Calu3 (cell line): ENCODE measurements at regions of chr3 and their contacts with region 1.

Region 1: GRCh38 chr3:44529927-44530326 is 25.1 kb upstream of the ZKSCAN7 start:
- DNase-seq: no peak
- H3K4me3 Mint-ChIP-seq: no peak overlapping the region
- H3K27ac Mint-ChIP-seq: no peak overlapping the region
- H3K4me1 Mint-ChIP-seq: peaks cover 9% of the 10 kb centered on the region
- H3K27me3 Mint-ChIP-seq: peaks cover 10% of the 10 kb centered on the region
- CTCF ChIP-seq: no peak

Region 2: DNA sequence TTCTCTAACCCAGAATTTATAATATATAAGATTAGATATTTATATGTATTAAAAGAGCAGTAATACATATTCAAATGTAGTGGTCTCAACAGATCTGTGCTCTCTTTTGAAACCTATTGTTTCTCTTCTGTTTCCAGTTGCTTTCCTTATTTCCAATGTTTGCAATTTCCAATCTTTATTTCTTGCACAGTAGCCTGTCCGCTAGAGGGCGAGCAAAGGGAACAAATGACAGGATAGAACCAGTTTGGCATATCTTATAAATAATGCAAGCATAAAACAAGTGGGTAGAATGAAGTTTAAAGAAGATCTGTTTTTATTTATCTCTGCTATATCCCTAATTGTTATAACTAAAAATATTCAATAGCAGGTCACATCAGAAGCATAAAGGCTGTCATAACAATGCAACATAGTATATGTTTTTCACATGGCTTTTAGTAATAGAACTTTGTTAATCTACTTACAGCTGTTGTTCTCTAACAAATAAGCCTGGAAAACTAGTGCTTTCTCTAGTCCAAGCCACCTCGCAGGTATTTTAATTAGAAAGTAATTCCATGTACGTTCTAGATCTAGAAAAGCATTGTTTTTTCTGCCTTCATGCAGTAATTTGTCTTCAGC is 206.5 kb before region 1 on chr3:
- CTCF ChIA-PET with region 1: no interaction called
- intact Hi-C with region 1: loop called (anchors 2 kb)
- DNase-seq: peak; percentile 73
- H3K4me3 Mint-ChIP-seq: no peak overlapping the region
- H3K27ac Mint-ChIP-seq: no peak overlapping the region
- H3K4me1 Mint-ChIP-seq: no peaks in the 10 kb centered on the region
- H3K27me3 Mint-ChIP-seq: no peaks in the 10 kb centered on the region
- CTCF ChIP-seq: peak; percentile 53

Region 3: DNA sequence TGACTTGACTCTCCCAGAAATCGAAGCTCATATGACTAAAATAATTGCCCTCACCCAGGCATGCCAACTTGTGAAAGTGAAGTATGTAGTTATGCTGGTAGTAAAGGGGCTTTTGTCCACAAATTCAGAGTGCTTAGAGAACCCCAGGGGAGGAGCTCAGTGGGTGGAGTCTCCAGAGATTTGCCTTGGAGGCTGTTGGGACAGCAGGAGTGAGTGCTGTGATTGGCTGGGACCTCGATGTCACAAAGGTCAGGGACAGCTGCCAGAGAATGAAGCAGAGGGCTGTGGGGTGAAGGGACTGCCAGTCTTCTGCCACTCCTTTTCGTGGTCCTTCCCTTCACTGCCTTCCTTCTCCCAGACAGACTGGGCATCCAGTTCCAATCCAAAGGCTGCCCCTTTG is 102.2 kb before region 1 on chr3:
- CTCF ChIA-PET with region 1: no interaction called
- intact Hi-C with region 1: no loop called
- DNase-seq: no peak
- H3K4me3 Mint-ChIP-seq: no peak overlapping the region
- H3K27ac Mint-ChIP-seq: no peak overlapping the region
- H3K4me1 Mint-ChIP-seq: no peaks in the 10 kb centered on the region
- H3K27me3 Mint-ChIP-seq: no peaks in the 10 kb centered on the region
- CTCF ChIP-seq: no peak

Region 4: DNA sequence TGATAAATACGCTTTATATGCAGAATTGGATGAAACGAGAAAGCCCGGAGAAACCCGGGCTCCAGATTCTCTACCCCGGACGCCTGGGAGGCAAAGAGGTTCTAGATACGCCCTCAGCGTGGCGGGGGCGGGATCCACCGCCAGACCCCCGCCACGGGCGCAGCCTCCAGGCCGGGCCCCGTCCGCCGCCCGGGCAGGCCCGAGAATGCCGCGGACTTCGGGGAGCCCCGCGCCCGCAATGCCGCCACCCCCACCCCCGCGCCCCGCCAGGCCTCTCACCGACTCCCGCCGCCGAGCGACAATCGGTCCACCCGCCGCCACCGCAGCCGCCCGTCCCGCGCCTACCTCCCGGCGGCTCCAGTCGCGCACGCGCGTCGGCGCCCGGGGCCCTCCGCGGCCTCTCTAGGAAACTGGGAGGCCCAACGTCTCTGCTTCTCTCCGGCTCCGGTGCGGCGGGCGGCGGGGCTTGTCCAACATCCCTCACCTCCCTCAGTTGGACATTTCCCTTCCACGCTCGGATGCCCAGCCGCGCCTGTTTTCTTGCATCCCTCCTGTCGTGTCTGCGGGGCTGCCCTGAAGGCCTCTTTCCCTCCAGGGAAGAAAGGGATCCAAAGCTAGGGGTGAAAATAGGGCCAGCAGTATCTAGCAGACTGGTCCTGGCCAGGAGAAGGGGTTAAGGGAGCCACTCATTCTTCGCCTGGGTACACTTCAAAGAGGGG is 52.5 kb before region 1 on chr3 and contains the start of gene ZNF445:
- CTCF ChIA-PET with region 1: no interaction called
- intact Hi-C with region 1: no loop called
- DNase-seq: peak; percentile 81
- H3K4me3 Mint-ChIP-seq: peak within 1 kb of the TSS; percentile 90
- H3K27ac Mint-ChIP-seq: peak within 1 kb of the TSS; percentile 10
- H3K4me1 Mint-ChIP-seq: peaks cover 8% of the 10 kb centered on the region
- H3K27me3 Mint-ChIP-seq: no peaks in the 10 kb centered on the region
- CTCF ChIP-seq: no peak
- total RNA-seq, gene ZNF445: 17.3 and 18.8 TPM in 2 replicates

Region 5: GRCh38 chr3:44624749-44625480 is 95.0 kb after region 1 on chr3 and contains the start of gene ZNF197:
- CTCF ChIA-PET with region 1: no interaction called
- intact Hi-C with region 1: loop called (anchors 5 kb)
- DNase-seq: peak; percentile 80
- H3K4me3 Mint-ChIP-seq: peak within 1 kb of the TSS; percentile 73
- H3K27ac Mint-ChIP-seq: peak within 1 kb of the TSS; percentile 60
- H3K4me1 Mint-ChIP-seq: no peaks in the 10 kb centered on the region
- H3K27me3 Mint-ChIP-seq: no peaks in the 10 kb centered on the region
- CTCF ChIP-seq: no peak
- total RNA-seq, gene ZNF197: 12.0 and 14.0 TPM in 2 replicates

Region 6: GRCh38 chr3:44761424-44762169 is 231.7 kb after region 1 on chr3 and contains the starts of genes KIAA1143 and KIF15:
- CTCF ChIA-PET with region 1: no interaction called
- intact Hi-C with region 1: loop called (anchors 5 kb)
- DNase-seq: peak; percentile 96
- H3K4me3 Mint-ChIP-seq: peak within 1 kb of the TSS; percentile 82
- H3K27ac Mint-ChIP-seq: peak within 1 kb of the TSS; percentile 79
- H3K4me1 Mint-ChIP-seq: no peaks in the 10 kb centered on the region
- H3K27me3 Mint-ChIP-seq: no peaks in the 10 kb centered on the region
- CTCF ChIP-seq: no peak
- total RNA-seq, gene KIAA1143: 28.8 and 36.9 TPM in 2 replicates
- total RNA-seq, gene KIF15: 17.0 and 18.4 TPM in 2 replicates

Region 7: GRCh38 chr3:44913868-44914468 is 384.0 kb after region 1 on chr3:
- CTCF ChIA-PET with region 1: no interaction called
- intact Hi-C with region 1: loop called (anchors 2 kb)
- DNase-seq: peak; percentile 78
- H3K4me3 Mint-ChIP-seq: no peak overlapping the region
- H3K27ac Mint-ChIP-seq: no peak overlapping the region
- H3K4me1 Mint-ChIP-seq: no peaks in the 10 kb centered on the region
- H3K27me3 Mint-ChIP-seq: no peaks in the 10 kb centered on the region
- CTCF ChIP-seq: peak; percentile 62